Heart right ventricle (tissue), 16 donors: ENCODE measurements at regions of chr7 and their contacts with region 1.

Region 1: GRCh38 chr7:149838224-149838947 is at the start of gene ZNF862:
- DNase-seq: peak; percentile 97 to 98
- ATAC-seq: peak; percentile 99 to 100 (median 99)
- H3K4me3 ChIP-seq: peak within 1 kb of the TSS; percentile 78 to 99 (median 92)
- H3K27ac ChIP-seq: peak within 1 kb of the TSS; percentile 36 to 98 (median 90)
- H3K4me1 ChIP-seq: peaks cover 0 to 20% (median 15%) of the 10 kb centered on the region in 9 donors
- H3K27me3 ChIP-seq: no peaks in the 10 kb centered on the region
- CTCF ChIP-seq: no peak
- total RNA-seq, gene ZNF862: 7.4 to 13.3 (median 10.5) TPM

Region 2: DNA sequence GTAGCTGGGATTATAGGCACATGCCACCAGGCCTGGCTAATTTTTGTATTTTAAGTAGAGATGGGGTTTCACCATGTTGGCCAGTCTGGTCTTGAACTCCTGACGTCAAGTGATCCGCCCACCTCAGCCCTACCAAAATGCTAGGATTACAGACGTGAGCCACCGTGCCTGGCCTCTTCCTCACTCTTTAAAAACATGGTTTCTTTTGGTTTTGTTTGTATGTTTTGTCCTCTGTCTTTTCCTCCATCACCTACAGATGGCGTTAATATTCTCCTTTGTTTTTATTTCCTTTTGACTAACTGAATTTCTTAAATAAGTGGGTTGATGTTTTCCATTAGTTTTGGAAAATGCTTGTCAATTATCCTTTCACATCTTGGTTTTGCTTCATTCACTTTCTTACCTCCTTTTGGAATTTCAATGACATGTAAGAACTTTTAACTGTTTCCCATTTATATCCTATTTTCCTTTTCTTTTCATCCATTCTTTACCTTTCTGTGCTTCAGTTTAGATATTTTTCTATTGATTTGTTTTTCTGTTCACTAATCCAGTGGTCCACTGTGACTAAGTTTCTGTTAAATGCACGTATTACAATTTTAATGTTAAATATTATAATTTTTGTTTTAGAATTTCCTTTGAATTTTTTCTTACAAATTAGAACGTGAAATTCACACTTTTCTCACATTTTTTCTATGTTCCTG is 169.1 kb before region 1 on chr7:
- intact Hi-C with region 1: no loop called
- DNase-seq: no peak
- ATAC-seq: no peak
- H3K4me3 ChIP-seq: no peak overlapping the region
- H3K27ac ChIP-seq: no peak overlapping the region
- H3K4me1 ChIP-seq: peaks cover 0 to 13% (median 5%) of the 10 kb centered on the region in 9 donors
- H3K27me3 ChIP-seq: peaks cover 0 to 6% (median 0%) of the 10 kb centered on the region in 7 donors
- CTCF ChIP-seq: peak in 7 of 9 donors; percentile 30 to 56 (median 48)

Region 3: DNA sequence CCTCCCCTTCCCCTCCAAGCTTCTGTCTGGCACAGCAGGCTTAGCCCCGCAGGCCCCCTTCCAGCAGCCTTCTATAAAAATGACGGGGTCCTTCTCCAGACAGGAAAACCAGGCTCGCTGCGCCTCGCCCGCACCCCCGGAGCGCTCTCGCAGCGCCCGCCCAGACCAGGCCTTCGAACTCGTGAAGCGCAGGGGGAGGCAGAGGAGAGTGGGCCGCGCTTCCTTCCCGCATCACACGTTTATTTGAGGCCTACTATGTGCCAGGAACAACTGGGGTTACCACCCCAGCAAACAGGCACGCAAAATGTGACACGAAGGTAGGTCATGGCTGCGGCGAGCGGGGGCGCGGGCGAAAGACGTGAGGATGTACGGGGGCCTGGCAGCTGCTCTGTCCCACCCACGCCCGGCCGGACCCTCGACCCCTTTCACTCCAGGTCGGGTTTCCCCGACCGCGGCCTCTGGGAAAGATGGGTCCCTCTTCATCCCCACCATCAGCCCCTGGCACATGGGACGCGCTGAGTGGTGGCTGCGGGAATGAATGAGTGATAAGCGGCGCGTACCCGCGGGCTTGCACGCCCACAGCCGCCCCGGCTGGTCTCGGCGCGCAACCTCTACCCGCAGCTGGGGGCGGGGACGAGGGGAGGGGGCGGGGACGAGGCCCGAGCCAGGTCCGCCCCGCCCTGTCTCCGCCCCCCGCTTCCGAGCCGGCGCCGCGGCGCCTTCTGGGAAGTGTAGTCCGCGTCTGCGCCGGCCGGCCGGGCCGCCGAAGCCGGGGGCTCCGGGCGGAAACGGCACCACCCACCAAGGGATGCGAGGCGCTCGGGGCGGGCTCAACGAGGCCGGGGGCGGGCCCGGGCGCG is 124.1 kb before region 1 on chr7:
- intact Hi-C with region 1: loop called in 1 of 10 experiments (anchors 10 kb)
- DNase-seq: peak; percentile 91 to 95
- ATAC-seq: peak; percentile 89 to 97 (median 92)
- H3K4me3 ChIP-seq: peak overlapping the region; percentile 63 to 82 (median 76)
- H3K27ac ChIP-seq: peak overlapping the region; percentile 67 to 91 (median 86)
- H3K4me1 ChIP-seq: peaks cover 10 to 49% (median 28%) of the 10 kb centered on the region in 9 donors
- H3K27me3 ChIP-seq: no peaks in the 10 kb centered on the region
- CTCF ChIP-seq: no peak

Region 4: DNA sequence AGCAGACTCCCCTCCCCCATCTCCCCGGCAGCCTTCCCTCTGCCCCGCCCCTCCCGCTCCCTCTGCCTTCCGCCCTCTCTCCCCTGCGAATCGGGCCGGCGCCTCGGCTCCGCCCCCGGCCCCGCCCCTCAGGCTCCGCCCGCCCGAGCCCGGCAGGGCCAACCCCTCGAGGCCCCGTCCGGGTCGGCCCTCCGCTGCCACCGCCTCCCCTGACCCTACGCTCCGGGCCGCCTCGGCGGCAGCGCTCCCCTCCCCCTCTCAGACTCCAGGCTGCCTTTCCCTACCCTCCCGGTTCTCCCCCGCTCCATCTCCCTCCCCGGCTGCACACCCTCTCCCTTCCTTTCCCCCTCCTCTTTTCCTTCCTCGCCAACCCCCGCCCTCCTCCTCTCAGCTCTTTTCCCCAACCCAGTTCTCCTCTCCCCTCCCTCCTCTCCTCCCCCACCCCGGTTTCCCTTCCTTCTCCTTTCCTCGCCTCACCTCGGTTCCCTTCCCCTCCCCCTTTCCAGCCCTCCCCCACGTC is 66.6 kb before region 1 on chr7:
- intact Hi-C with region 1: loop called in 1 of 10 experiments (anchors 2 kb)
- DNase-seq: peak; percentile 90 to 93
- ATAC-seq: peak; percentile 88 to 95 (median 92)
- H3K4me3 ChIP-seq: peak overlapping the region in 9 of 10 donors; percentile 48 to 74 (median 64)
- H3K27ac ChIP-seq: peak overlapping the region in 9 of 10 donors; percentile 34 to 89 (median 72)
- H3K4me1 ChIP-seq: peaks cover 7 to 43% (median 37%) of the 10 kb centered on the region in 9 donors
- H3K27me3 ChIP-seq: peaks cover 0 to 12% (median 2%) of the 10 kb centered on the region in 7 donors
- CTCF ChIP-seq: no peak

Region 5: GRCh38 chr7:149873074-149873969 is 34.9 kb after region 1 on chr7 and contains the start of gene ATP6V0E2:
- intact Hi-C with region 1: loop called in 2 of 10 experiments (anchors 1 to 5 kb)
- DNase-seq: peak; percentile 95 to 97
- ATAC-seq: peak; percentile 93 to 97 (median 95)
- H3K4me3 ChIP-seq: peak within 1 kb of the TSS; percentile 70 to 95 (median 81)
- H3K27ac ChIP-seq: peak within 1 kb of the TSS; percentile 81 to 97 (median 92)
- H3K4me1 ChIP-seq: peaks cover 8 to 56% (median 25%) of the 10 kb centered on the region in 9 donors
- H3K27me3 ChIP-seq: no peaks in the 10 kb centered on the region
- CTCF ChIP-seq: no peak
- total RNA-seq, gene ATP6V0E2: 69.2 to 119 (median 96.7) TPM